Activated B cell treated with CpG ODN at 0.5 μM for 24 hours (primary cell): ENCODE measurements at regions of chr1 and their contacts with region 1.

Region 1: DNA sequence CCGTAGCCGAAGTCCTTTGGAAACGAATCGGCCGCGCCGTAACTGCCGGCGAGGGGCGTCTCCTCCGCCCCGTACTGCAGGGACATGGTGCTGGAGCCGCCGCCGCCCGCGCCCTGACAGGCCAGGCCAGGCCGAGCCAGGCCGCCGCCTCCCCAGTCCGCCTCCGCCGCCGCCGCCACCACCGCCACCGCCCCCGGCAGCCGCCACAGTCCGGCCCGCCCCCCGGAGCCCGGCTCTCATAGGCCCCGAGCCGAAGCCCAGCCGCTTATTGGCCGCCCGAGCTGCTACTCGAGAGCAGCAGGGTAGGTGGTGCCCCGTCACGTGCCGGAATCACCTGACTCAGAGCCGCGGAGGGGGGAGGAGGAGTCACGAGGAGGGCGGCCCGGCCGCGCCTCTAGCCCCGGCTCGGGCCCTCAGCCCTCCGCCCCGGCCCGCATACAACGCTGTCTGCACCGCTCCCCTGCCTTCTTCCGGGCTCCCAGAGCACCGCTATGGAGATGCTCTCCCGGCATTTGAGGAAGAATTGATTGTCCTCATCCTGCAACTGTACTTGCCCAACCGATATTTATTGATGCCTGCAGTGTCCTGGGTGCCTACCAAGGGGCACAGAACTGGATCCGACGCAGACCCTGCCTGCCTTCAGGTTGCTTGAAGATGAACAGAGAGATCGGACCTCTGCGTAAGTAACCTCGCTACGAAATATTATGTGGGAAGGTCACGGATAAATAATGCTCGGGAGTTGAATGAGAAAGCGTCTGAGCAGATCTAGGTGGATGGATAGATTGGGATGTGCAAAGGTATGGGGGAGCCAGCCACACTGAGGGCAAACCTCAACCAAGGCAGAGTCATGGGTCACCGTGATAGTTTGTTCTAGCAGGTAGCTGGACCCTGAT is at the start of gene RRAGC:
- DNase-seq: peak; percentile 96
- ATAC-seq: peak; percentile 91
- H3K4me3 Mint-ChIP-seq: peak within 1 kb of the TSS; percentile 95
- H3K27ac Mint-ChIP-seq: peak within 1 kb of the TSS; percentile 93
- H3K4me1 Mint-ChIP-seq: peaks cover 53% of the 10 kb centered on the region
- H3K27me3 Mint-ChIP-seq: no peaks in the 10 kb centered on the region
- CTCF ChIP-seq: no peak
- total RNA-seq, gene RRAGC: 33.7 and 35.9 TPM in 2 replicates

Region 2: DNA sequence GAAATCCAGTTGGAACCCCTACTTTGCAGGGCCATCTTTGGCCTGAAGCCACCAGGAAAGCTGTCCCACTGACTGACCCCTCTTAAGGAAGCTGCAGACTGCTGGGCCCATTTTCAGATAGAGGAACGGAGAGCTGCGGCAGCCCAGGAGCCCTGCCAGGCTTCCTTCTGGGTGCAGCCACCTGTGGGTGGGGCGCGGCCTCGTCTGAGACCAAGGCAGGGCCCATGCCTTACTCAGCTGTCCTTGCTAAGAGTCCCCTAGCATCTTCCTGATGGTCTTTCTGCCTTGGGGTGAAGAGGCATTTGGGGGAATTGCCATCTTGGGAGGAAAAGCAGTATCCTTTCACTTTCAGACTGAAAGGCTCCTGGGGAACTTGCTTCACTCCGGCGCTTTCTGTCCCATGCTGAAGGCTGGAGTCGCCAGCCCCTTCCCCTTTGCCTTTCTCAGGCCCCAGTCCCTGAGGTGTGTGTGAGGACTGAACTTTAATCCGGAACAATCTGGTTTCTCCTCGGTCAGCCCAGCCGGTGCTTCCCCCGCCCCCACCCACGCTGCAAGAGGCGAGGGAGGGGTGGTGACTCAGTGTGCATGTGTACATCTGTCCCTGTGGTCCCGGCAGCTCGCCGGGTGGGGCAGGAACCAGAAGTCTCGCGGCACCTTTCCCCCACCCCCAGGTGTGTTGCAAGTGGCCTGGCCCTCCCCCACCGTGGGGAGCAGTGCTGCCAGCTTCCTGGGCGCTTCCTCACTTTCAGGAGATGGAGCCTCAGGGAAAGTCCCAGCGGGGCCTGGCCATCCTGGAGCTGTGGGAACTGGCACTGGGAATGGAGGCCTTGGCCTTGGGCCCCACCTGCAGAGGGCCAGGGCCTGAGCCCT is 1380.3 kb before region 1 on chr1:
- CTCF ChIA-PET with region 1: no interaction called
- POLR2A ChIA-PET with region 1: no interaction called
- intact Hi-C with region 1: loop called (anchors 1 kb)
- DNase-seq: peak; percentile 64
- ATAC-seq: peak; percentile 54
- H3K4me3 Mint-ChIP-seq: peak overlapping the region; percentile 99
- H3K27ac Mint-ChIP-seq: peak overlapping the region; percentile 92
- H3K4me1 Mint-ChIP-seq: peaks cover 61% of the 10 kb centered on the region
- H3K27me3 Mint-ChIP-seq: no peaks in the 10 kb centered on the region
- CTCF ChIP-seq: no peak

Region 3: DNA sequence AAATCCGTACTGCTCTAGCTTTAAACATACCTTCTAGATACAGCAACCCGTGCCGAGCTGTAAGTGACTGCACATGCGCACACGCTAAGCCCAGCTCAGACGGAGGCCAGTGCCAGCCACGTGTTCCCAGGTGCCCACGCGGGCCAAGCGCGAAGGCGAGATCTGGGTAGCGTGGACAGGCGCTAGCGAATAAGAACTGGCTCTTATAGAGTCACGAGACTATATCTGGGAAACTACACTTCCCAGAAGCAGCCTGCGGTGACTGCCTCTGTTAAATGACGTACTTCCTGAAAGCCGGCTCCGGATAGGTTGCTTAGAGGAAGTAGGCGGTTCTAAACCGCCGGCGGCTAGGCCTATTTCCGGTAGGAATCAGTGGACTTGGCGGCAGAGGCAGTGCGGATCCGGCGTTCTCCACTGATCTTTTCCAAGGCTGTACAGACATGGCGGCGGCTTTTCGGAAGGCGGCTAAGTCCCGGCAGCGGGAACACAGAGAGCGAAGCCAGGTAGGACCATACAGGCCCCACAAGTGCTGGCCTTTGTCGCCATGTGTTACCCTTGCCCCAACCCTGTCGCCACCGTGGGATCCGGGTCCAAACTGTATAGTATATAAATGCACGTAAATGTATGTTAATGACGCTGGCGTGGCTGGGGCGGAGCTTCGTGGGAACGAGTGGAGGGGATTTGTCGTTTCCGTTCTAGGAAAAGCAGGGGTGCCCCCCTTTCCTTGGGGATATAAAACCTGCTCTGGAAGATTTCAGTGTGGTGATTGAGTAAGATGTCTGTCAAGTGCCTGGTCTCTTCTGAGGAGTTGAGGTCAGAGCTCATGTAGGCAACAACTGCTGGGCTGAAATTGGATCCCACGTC is 847.2 kb before region 1 on chr1 and contains the start of gene UTP11:
- CTCF ChIA-PET with region 1: no interaction called
- POLR2A ChIA-PET with region 1: no interaction called
- intact Hi-C with region 1: loop called (anchors 1 kb)
- DNase-seq: peak; percentile 74
- ATAC-seq: peak; percentile 97
- H3K4me3 Mint-ChIP-seq: peak within 1 kb of the TSS; percentile 100
- H3K27ac Mint-ChIP-seq: peak within 1 kb of the TSS; percentile 94
- H3K4me1 Mint-ChIP-seq: peaks cover 27% of the 10 kb centered on the region
- H3K27me3 Mint-ChIP-seq: no peaks in the 10 kb centered on the region
- CTCF ChIP-seq: no peak
- total RNA-seq, gene UTP11: 26.1 and 28.6 TPM in 2 replicates

Region 4: DNA sequence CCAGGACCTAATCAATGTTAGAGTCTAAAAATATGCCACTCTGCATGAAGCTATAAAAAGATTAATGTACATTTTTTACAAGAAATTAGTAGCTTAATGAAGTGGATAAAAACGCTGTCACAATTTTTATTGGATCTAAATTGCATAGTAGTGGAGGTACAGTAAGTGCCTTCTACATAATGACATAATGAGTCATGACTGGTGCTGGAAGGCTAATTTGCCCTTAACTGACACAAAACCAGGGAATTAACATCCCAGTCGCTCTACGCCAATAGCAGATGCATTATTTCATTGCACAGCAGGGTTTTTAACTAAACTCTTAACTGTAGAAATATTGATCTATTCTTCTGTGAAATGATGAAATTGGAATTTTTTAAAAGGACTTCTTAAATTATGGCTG is 33.5 kb before region 1 on chr1:
- CTCF ChIA-PET with region 1: no interaction called
- POLR2A ChIA-PET with region 1: no interaction called
- intact Hi-C with region 1: no loop called
- DNase-seq: no peak
- ATAC-seq: no peak
- H3K4me3 Mint-ChIP-seq: no peak overlapping the region
- H3K27ac Mint-ChIP-seq: no peak overlapping the region
- H3K4me1 Mint-ChIP-seq: no peaks in the 10 kb centered on the region
- H3K27me3 Mint-ChIP-seq: peaks cover 40% of the 10 kb centered on the region
- CTCF ChIP-seq: no peak

Region 5: DNA sequence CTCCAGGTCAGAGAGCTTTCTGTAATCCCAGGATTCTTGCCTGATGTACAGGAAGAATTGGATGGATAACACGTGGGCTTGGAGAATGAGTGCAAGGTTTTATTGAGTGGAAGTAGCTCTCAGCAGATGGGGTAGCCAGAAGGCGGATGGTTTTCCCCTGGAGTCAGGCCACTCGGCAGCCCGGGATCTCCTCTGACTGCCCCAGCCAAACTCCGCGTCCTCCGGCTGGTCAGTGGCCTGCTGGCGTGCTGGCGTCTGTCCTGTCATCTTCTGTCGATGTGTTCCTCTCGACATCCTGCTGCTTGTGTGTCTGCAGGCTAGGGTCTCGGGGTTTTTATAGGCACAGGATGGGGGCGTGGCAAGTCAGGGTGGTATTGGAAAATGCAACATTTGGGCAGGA is 49.0 kb after region 1 on chr1:
- CTCF ChIA-PET with region 1: no interaction called
- POLR2A ChIA-PET with region 1: no interaction called
- intact Hi-C with region 1: no loop called
- DNase-seq: no peak
- ATAC-seq: no peak
- H3K4me3 Mint-ChIP-seq: no peak overlapping the region
- H3K27ac Mint-ChIP-seq: no peak overlapping the region
- H3K4me1 Mint-ChIP-seq: no peaks in the 10 kb centered on the region
- H3K27me3 Mint-ChIP-seq: no peaks in the 10 kb centered on the region
- CTCF ChIP-seq: no peak

Region 6: DNA sequence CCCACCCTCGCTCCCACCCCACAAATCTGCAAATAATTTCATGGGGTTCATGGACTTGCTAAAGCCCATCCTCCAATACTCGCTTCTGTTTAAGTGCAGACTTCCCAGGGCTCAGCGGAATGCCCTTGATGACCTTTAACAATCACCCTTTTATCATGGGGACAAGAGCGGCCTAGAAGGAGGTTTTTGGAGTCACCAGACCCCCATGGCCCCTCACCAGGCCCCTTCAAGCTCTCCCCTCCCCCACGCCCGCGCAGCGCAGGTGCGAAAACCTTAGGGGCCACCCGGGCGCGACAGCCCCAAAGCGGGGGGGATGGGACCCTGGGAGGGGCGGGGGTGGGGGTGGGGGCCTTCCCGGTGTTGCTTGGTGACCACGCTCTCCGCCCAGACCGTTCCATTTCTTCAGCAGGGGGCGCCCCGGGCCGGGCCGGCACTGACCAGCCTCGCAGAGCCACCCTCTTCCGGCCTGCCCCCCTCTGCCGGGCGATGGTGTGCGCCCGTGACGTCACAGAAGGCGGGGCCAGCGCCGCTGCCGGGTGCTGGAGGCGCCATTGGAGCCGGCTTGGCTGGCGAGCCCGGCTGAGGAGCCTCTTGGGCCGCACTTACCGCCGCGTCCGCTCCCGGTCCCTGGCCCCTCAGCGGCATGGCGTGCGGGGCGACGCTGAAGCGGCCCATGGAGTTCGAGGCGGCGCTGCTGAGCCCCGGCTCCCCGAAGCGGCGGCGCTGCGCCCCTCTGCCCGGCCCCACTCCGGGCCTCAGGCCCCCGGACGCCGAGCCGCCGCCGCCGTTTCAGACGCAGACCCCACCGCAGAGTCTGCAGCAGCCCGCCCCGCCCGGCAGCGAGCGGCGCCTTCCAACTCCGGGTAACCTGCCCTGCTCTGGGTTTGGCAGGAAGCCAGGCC is 131.2 kb after region 1 on chr1 and contains the start of gene AKIRIN1:
- CTCF ChIA-PET with region 1: no interaction called
- POLR2A ChIA-PET with region 1: interaction called, 3 read pairs
- intact Hi-C with region 1: loop called (anchors 1 kb)
- DNase-seq: peak; percentile 100
- ATAC-seq: peak; percentile 92
- H3K4me3 Mint-ChIP-seq: peak within 1 kb of the TSS; percentile 91
- H3K27ac Mint-ChIP-seq: peak within 1 kb of the TSS; percentile 92
- H3K4me1 Mint-ChIP-seq: peaks cover 30% of the 10 kb centered on the region
- H3K27me3 Mint-ChIP-seq: no peaks in the 10 kb centered on the region
- CTCF ChIP-seq: no peak
- total RNA-seq, gene AKIRIN1: 53.3 and 57.3 TPM in 2 replicates

Region 7: GRCh38 chr1:39091845-39092645 is 232.2 kb after region 1 on chr1:
- CTCF ChIA-PET with region 1: no interaction called
- POLR2A ChIA-PET with region 1: no interaction called
- intact Hi-C with region 1: loop called (anchors 2 kb)
- DNase-seq: no peak
- ATAC-seq: peak; percentile 75
- H3K4me3 Mint-ChIP-seq: no peak overlapping the region
- H3K27ac Mint-ChIP-seq: no peak overlapping the region
- H3K4me1 Mint-ChIP-seq: peaks cover 4% of the 10 kb centered on the region
- H3K27me3 Mint-ChIP-seq: no peaks in the 10 kb centered on the region
- CTCF ChIP-seq: no peak

Region 8: GRCh38 chr1:39344394-39345154 is 484.8 kb after region 1 on chr1:
- CTCF ChIA-PET with region 1: no interaction called
- POLR2A ChIA-PET with region 1: no interaction called
- intact Hi-C with region 1: no loop called
- DNase-seq: no peak
- ATAC-seq: no peak
- H3K4me3 Mint-ChIP-seq: no peak overlapping the region
- H3K27ac Mint-ChIP-seq: no peak overlapping the region
- H3K4me1 Mint-ChIP-seq: no peaks in the 10 kb centered on the region
- H3K27me3 Mint-ChIP-seq: no peaks in the 10 kb centered on the region
- CTCF ChIP-seq: no peak